ENCODE measurements at regions of chrX and their contacts with region 1.

Region 1: GRCh38 chrX:10189317-10190268 is 32.8 kb downstream of the CLCN4 start:
- DNase-seq: peak; percentile 49
- H3K4me3 ChIP-seq: no peak overlapping the region
- H3K27ac ChIP-seq: no peak overlapping the region
- H3K4me1 ChIP-seq: peaks cover 10% of the 10 kb centered on the region
- H3K27me3 ChIP-seq: no peaks in the 10 kb centered on the region
- CTCF ChIP-seq: peak; percentile 74

Region 2: GRCh38 chrX:10636337-10636736 is 446.7 kb after region 1 on chrX:
- intact Hi-C with region 1: loop called (anchors 10 kb)
- DNase-seq: no peak
- H3K4me3 ChIP-seq: peak overlapping the region; percentile 23
- H3K27ac ChIP-seq: peak overlapping the region; percentile 23
- H3K4me1 ChIP-seq: no peaks in the 10 kb centered on the region
- H3K27me3 ChIP-seq: no peaks in the 10 kb centered on the region
- CTCF ChIP-seq: peak; percentile 68

Region 3: GRCh38 chrX:11100281-11101035 is 910.9 kb after region 1 on chrX:
- intact Hi-C with region 1: loop called (anchors 10 kb)
- DNase-seq: no peak
- H3K4me3 ChIP-seq: no peak overlapping the region
- H3K27ac ChIP-seq: no peak overlapping the region
- H3K4me1 ChIP-seq: no peaks in the 10 kb centered on the region
- H3K27me3 ChIP-seq: no peaks in the 10 kb centered on the region
- CTCF ChIP-seq: peak; percentile 47

Measured in left ventricle myocardium inferior (tissue), 1 donor.